GM12878 (cell line): ENCODE measurements at regions of chr3 and their contacts with region 1.

Region 1: GRCh38 chr3:176872771-176873209 is 324.5 kb downstream of the TBL1XR1 start:
- DNase-seq: peak; percentile 16
- ATAC-seq: peak; percentile 99
- H3K4me3 ChIP-seq: no peak overlapping the region
- H3K27ac ChIP-seq: no peak overlapping the region
- H3K4me1 ChIP-seq: no peaks in the 10 kb centered on the region
- H3K27me3 ChIP-seq: no peaks in the 10 kb centered on the region
- CTCF ChIP-seq: peak; percentile 82 to 91 (median 84)
- EP300 ChIP-seq: no peak
- POLR2A ChIP-seq: no peak
- RAD21 ChIP-seq: peak; percentile 80

Region 2: DNA sequence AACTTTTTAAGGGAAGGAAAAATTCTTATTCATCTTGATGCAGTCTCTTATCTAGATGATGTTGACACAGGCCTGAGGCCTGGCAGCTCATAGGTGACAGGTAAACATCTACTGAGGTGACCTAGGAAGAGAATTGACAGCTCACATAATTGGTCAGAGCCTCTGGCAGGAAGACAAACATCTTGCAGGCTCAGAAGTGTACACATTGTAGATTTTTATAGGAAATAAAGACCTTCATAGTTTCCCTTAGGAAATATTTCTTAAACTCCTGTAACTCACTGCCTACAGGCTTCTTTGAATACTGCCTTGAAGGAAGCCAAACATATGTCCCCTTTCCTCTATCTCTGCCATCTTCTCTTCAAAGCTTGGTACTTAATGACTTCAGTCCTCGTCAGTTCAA is 16.8 kb before region 1 on chr3:
- CTCF ChIA-PET with region 1: interaction called, 11 read pairs
- POLR2A ChIA-PET with region 1: no interaction called
- RAD21 ChIA-PET with region 1: no interaction called
- SMC1A ChIA-PET with region 1: interaction called, 3 read pairs
- in situ Hi-C with region 1: no loop called
- intact Hi-C with region 1: no loop called
- DNase-seq: no peak
- ATAC-seq: no peak
- H3K4me3 ChIP-seq: no peak overlapping the region
- H3K27ac ChIP-seq: no peak overlapping the region
- H3K4me1 ChIP-seq: no peaks in the 10 kb centered on the region
- H3K27me3 ChIP-seq: no peaks in the 10 kb centered on the region
- CTCF ChIP-seq: no peak
- EP300 ChIP-seq: no peak
- POLR2A ChIP-seq: no peak
- RAD21 ChIP-seq: no peak

Region 3: GRCh38 chr3:176930942-176931341 is 58.2 kb after region 1 on chr3:
- CTCF ChIA-PET with region 1: interaction called, 10 read pairs
- POLR2A ChIA-PET with region 1: no interaction called
- RAD21 ChIA-PET with region 1: interaction called, 3 read pairs
- SMC1A ChIA-PET with region 1: interaction called, 9 read pairs
- in situ Hi-C with region 1: no loop called
- intact Hi-C with region 1: no loop called
- DNase-seq: no peak
- ATAC-seq: no peak
- H3K4me3 ChIP-seq: no peak overlapping the region
- H3K27ac ChIP-seq: no peak overlapping the region
- H3K4me1 ChIP-seq: no peaks in the 10 kb centered on the region
- H3K27me3 ChIP-seq: 0 out of 4 replicates have a peak, but pooled peaks cover 0 to 1% of the 10 kb centered on the region in 2 experiments
- CTCF ChIP-seq: no peak
- EP300 ChIP-seq: no peak
- POLR2A ChIP-seq: no peak
- RAD21 ChIP-seq: no peak

Region 4: DNA sequence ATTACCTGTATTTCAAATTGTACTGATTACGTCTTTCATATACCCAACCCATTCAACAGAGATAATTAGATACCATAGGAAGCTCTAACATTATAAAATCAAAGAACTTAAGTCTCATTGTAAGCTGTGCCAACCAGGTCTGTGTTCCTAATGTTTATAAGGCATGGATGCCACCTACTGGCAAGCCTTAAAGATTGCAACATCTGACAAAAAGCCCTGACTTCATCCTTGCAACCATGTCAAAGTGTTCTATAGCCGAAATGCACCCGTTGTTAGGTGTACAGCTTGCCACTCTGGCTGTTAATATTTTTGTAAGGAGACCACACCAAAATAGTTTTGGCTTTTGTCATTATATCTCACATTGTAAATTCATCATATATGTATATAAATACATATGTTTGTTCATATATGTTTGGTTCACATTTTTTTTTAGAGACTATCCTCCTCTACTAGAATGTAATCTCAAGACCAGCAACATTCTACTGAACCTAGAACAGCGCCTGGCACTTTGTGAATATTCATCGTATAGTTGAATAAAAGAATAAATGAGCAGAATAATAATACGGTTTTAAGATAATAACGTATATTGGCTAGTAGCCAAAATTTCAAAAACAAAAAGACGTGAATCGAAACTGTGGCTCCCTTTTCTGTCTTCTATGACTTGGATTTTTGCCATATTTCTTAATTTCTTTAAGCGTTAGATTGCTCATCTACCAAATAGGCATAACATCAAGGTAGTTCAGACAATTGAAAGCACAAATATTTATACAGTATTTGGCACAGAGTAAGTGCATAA is 66.4 kb after region 1 on chr3:
- CTCF ChIA-PET with region 1: interaction called, 56 read pairs
- POLR2A ChIA-PET with region 1: no interaction called
- RAD21 ChIA-PET with region 1: interaction called, 34 read pairs
- SMC1A ChIA-PET with region 1: interaction called, 33 read pairs
- in situ Hi-C with region 1: no loop called
- intact Hi-C with region 1: loop called (anchors 1 kb)
- DNase-seq: peak; percentile 5
- ATAC-seq: peak; percentile 96
- H3K4me3 ChIP-seq: no peak overlapping the region
- H3K27ac ChIP-seq: no peak overlapping the region
- H3K4me1 ChIP-seq: no peaks in the 10 kb centered on the region
- H3K27me3 ChIP-seq: 0 out of 4 replicates have a peak, but pooled peaks cover 0 to 1% of the 10 kb centered on the region in 2 experiments
- CTCF ChIP-seq: peak; percentile 73 to 82 (median 81)
- EP300 ChIP-seq: no peak
- POLR2A ChIP-seq: no peak
- RAD21 ChIP-seq: peak; percentile 83

Region 5: DNA sequence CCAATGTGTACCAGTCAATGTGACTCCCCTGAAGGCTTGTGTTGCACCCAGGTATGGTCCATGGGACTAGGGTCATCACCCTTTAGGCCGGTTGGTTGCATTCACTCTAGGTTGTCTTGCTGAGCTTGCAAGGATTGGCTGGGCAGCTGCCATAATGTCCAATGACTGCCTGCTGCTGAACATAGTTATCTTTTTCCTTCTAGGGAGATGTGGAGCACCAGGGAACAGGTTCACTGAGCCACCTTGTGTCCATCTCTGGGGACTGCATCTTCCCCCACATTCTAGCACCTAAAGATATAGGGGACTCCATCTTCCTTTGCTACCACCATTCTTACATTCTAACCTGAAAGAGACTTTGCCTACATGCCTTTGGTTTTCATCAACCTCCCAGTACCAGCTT is 904.9 kb after region 1 on chr3:
- CTCF ChIA-PET with region 1: interaction called, 6 read pairs
- POLR2A ChIA-PET with region 1: no interaction called
- RAD21 ChIA-PET with region 1: no interaction called
- SMC1A ChIA-PET with region 1: interaction called, 3 read pairs
- in situ Hi-C with region 1: no loop called
- intact Hi-C with region 1: loop called (anchors 2 kb)
- DNase-seq: peak; percentile 20
- ATAC-seq: peak; percentile 97
- H3K4me3 ChIP-seq: no peak overlapping the region
- H3K27ac ChIP-seq: no peak overlapping the region
- H3K4me1 ChIP-seq: no peaks in the 10 kb centered on the region; the same call in 1 of the 2 replicates
- H3K27me3 ChIP-seq: no peaks in the 10 kb centered on the region
- CTCF ChIP-seq: peak; percentile 74 to 80 (median 78)
- EP300 ChIP-seq: no peak
- POLR2A ChIP-seq: no peak
- RAD21 ChIP-seq: peak; percentile 87

Region 6: DNA sequence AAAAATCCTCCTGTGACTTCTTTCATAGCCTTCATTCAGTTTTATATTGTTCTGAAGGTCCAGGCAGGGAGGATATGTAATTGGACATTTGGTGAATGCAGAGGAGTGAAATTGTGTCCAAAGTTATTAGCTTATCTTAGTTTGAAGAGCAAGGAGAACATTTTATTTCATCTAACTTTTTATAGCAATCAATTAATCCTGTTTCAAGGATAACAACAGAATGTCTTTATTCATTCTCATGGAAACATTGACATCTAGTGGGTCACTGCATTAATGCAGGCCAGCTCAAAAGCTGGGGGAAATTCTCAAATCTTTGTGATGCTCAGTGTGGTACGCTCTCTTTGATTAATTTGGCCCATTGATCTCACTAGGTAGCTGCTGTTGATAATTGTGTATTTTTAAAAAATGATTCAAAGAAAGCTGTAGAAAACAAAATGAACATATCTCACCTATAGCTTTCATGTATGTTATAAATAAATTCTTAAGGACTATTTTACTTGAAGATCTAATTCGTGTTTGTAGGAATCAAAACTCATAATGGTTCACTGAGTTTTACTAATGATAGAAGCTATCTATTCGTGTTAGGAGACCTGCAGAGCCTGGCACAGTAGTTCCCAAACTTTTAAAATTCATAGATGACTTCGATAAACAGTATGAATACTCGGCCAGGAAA is 1512.6 kb after region 1 on chr3:
- CTCF ChIA-PET with region 1: interaction called, 10 read pairs
- POLR2A ChIA-PET with region 1: no interaction called
- RAD21 ChIA-PET with region 1: interaction called, 3 read pairs
- SMC1A ChIA-PET with region 1: interaction called, 3 read pairs
- in situ Hi-C with region 1: no loop called
- intact Hi-C with region 1: loop called (anchors 5 kb)
- DNase-seq: no peak
- ATAC-seq: peak; percentile 64
- H3K4me3 ChIP-seq: no peak overlapping the region
- H3K27ac ChIP-seq: no peak overlapping the region
- H3K4me1 ChIP-seq: no peaks in the 10 kb centered on the region
- H3K27me3 ChIP-seq: no peaks in the 10 kb centered on the region
- CTCF ChIP-seq: peak; percentile 52 to 73 (median 58); a peak in 5 of 6 replicates
- EP300 ChIP-seq: no peak
- POLR2A ChIP-seq: no peak
- RAD21 ChIP-seq: peak; percentile 89